T-cell (primary cell): ENCODE measurements at regions of chr7 and their contacts with region 1.

Region 1: DNA sequence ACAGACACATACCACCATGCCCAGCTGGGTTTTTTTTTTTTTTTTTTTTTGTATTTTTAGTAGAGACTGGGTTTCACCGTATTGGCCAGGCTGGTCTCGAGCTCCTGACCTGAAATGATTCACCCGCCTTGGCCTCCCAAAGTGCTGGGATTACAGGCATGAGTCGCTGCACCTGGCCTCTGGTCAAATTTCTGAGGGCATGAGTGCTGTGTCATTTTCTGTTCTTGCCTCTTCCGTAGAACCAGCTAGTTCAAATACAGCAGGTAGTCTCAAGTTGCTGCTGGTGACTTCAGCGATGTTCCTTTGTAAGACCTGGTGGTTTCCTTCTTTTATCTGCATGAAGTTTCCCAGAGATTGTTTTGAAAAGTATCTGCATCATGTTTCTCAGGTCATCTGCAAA is 134.8 kb upstream of the SHH start:
- DNase-seq: no peak
- ATAC-seq: no peak
- H3K4me3 ChIP-seq: no peak overlapping the region
- H3K4me3 Mint-ChIP-seq: no peak overlapping the region
- H3K27ac ChIP-seq: no peak overlapping the region
- H3K27ac Mint-ChIP-seq: no peak overlapping the region
- H3K4me1 ChIP-seq: peaks cover 0 to 6% of the 10 kb centered on the region in 2 experiments
- H3K4me1 Mint-ChIP-seq: peaks cover 0 to 16% (median 6%) of the 10 kb centered on the region in 3 donors
- H3K27me3 ChIP-seq: peaks cover 0 to 16% of the 10 kb centered on the region in 2 experiments
- H3K27me3 Mint-ChIP-seq: peaks cover 0 to 4% of the 10 kb centered on the region in 2 donors

Region 2: GRCh38 chr7:155885167-155886155 is 61.6 kb before region 1 on chr7:
- CTCF ChIA-PET with region 1: no interaction called
- POLR2A ChIA-PET with region 1: no interaction called
- DNase-seq: no peak
- ATAC-seq: no peak
- H3K4me3 ChIP-seq: no peak overlapping the region
- H3K4me3 Mint-ChIP-seq: no peak overlapping the region
- H3K27ac ChIP-seq: no peak overlapping the region
- H3K27ac Mint-ChIP-seq: no peak overlapping the region
- H3K4me1 ChIP-seq: no peaks in the 10 kb centered on the region
- H3K4me1 Mint-ChIP-seq: no peaks in the 10 kb centered on the region
- H3K27me3 ChIP-seq: peaks cover 0 to 41% of the 10 kb centered on the region in 2 experiments
- H3K27me3 Mint-ChIP-seq: peaks cover 4 to 9% of the 10 kb centered on the region in 2 donors

Region 3: GRCh38 chr7:155931396-155932085 is 15.5 kb before region 1 on chr7:
- CTCF ChIA-PET with region 1: no interaction called
- POLR2A ChIA-PET with region 1: no interaction called
- DNase-seq: no peak
- ATAC-seq: no peak
- H3K4me3 ChIP-seq: no peak overlapping the region
- H3K4me3 Mint-ChIP-seq: no peak overlapping the region
- H3K27ac ChIP-seq: no peak overlapping the region
- H3K27ac Mint-ChIP-seq: no peak overlapping the region
- H3K4me1 ChIP-seq: no peaks in the 10 kb centered on the region
- H3K4me1 Mint-ChIP-seq: no peaks in the 10 kb centered on the region
- H3K27me3 ChIP-seq: peaks cover 0 to 21% of the 10 kb centered on the region in 2 experiments
- H3K27me3 Mint-ChIP-seq: peaks cover 6% of the 10 kb centered on the region in 2 donors

Region 4: DNA sequence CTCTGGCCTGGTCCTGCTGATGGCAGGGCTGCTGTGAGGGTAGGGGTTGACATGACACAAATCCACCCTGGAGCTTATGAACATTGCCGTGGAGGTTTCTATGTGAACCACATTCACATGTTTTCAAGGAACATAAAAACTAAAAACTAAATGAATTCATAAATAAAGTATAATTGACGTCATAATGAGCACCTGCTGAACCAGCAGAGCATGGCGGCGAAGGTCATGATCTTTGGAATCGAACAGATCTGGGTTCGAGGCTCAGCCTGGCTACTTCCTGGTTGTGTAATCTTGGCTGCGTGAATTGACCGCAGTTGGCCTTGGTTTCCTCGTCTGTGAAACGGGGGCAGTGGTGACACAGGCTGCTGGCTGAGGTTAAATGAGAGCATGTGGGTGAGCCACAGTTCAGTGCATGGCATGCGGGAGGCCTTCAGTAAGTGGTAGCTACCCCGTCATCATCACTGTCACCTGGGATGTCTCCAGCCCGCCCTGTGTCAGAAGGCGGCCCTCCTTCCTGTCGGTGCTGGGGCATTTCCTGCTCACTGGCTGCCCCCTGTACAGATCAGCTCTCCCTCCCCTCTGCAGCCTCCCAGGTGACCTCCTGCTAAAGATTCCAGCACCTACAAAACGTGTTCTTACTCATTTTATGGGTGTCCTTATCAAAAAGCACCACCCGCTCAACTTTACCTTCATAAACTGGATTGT is 55.5 kb after region 1 on chr7:
- CTCF ChIA-PET with region 1: no interaction called
- POLR2A ChIA-PET with region 1: interaction called in 1 of 2 experiments, 13 read pairs
- DNase-seq: peak in 2 of 35 experiments; percentile 14 to 18
- ATAC-seq: peak in 2 of 4 experiments; percentile 23 to 71
- H3K4me3 ChIP-seq: no peak overlapping the region
- H3K4me3 Mint-ChIP-seq: no peak overlapping the region
- H3K27ac ChIP-seq: no peak overlapping the region
- H3K27ac Mint-ChIP-seq: no peak overlapping the region
- H3K4me1 ChIP-seq: peaks cover 12 to 29% of the 10 kb centered on the region in 2 experiments
- H3K4me1 Mint-ChIP-seq: peaks cover 9 to 26% (median 12%) of the 10 kb centered on the region in 3 donors
- H3K27me3 ChIP-seq: peaks cover 0 to 41% of the 10 kb centered on the region in 2 experiments
- H3K27me3 Mint-ChIP-seq: peaks cover 3 to 19% of the 10 kb centered on the region in 2 donors